Thyroid gland (tissue), 4 donors: ENCODE measurements at regions of chr6 and their contacts with region 1.

Region 1: DNA sequence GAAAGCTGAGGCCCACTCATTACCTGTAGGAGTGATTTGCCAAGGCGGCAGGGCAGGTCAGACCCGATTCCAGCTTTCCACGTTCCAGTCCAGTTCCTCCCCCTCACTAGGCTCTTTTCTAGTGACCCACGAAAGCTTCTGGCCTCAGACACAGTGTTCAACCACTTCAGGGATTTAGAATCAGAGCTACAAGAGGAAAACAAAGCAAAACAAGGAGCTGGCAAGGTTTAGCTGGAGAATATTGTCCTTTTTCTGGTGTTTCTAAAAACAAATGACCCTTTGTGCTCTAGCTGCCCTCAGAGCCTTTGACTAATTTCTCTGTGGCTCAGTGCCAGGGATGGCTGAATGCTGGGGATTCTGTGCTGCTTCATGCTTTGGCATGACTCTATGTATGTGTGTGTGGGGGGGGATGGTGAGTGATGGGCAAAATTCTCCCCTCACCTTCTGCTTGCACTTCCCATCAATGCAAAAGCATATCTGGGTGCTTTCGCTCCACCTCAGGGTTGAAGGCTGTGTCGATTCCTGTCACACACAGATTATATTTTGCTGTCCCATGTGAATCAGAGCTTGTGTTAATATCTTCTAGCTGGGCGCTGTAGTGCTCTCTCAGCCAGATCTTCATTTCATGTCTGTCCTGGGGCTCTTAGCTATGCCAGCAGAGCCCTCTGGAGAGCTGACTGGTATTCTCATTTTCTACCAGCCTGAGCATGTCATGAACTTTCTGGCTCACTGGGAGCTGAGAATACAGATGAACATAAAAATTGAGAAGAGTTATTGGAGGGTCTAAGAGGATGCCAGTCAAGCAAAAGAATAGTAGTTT is 19.3 kb upstream of the NEDD9 start:
- DNase-seq: peak; percentile 82
- H3K4me3 ChIP-seq: no peak overlapping the region
- H3K27ac ChIP-seq: peak overlapping the region; percentile 86 to 93 (median 88)
- H3K4me1 ChIP-seq: peaks cover 29 to 42% of the 10 kb centered on the region in 2 donors
- H3K27me3 ChIP-seq: no peaks in the 10 kb centered on the region
- CTCF ChIP-seq: peak in 1 of 6 experiments; percentile 4
- POLR2A ChIP-seq: peak in 1 of 2 donors; percentile 16

Region 2: GRCh38 chr6:10759312-10759839 is 492.4 kb before region 1 on chr6:
- intact Hi-C with region 1: no loop called
- DNase-seq: no peak
- H3K4me3 ChIP-seq: no peak overlapping the region
- H3K27ac ChIP-seq: peak overlapping the region; percentile 11 to 64 (median 41)
- H3K4me1 ChIP-seq: peaks cover 0 to 14% of the 10 kb centered on the region in 2 donors
- H3K27me3 ChIP-seq: no peaks in the 10 kb centered on the region
- CTCF ChIP-seq: peak in 3 of 6 experiments; percentile 35 to 44 (median 44)
- POLR2A ChIP-seq: no peak

Region 3: DNA sequence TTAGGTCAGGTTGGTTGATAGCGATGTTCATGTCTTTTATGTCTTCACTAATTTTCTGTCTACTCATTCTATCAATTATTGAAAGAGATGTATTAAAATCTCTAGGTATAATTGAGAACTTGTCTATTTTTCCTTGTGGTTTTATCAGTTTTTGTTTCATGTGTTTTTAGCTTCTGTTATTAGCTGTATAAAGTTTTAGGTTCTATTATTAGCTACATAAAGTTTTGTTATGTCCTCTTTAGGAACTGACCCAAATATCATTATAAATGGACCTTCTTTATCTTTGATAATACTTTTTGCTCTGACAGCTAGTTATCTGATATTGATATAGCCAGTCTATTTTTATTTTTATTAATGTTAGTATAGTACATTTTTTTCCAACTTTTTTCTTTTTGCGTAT is 193.4 kb after region 1 on chr6:
- intact Hi-C with region 1: no loop called
- DNase-seq: no peak
- H3K4me3 ChIP-seq: no peak overlapping the region
- H3K27ac ChIP-seq: peak overlapping the region; percentile 5 to 75 (median 66)
- H3K4me1 ChIP-seq: peaks cover 9 to 15% of the 10 kb centered on the region in 2 donors
- H3K27me3 ChIP-seq: no peaks in the 10 kb centered on the region
- CTCF ChIP-seq: no peak
- POLR2A ChIP-seq: no peak

Region 4: DNA sequence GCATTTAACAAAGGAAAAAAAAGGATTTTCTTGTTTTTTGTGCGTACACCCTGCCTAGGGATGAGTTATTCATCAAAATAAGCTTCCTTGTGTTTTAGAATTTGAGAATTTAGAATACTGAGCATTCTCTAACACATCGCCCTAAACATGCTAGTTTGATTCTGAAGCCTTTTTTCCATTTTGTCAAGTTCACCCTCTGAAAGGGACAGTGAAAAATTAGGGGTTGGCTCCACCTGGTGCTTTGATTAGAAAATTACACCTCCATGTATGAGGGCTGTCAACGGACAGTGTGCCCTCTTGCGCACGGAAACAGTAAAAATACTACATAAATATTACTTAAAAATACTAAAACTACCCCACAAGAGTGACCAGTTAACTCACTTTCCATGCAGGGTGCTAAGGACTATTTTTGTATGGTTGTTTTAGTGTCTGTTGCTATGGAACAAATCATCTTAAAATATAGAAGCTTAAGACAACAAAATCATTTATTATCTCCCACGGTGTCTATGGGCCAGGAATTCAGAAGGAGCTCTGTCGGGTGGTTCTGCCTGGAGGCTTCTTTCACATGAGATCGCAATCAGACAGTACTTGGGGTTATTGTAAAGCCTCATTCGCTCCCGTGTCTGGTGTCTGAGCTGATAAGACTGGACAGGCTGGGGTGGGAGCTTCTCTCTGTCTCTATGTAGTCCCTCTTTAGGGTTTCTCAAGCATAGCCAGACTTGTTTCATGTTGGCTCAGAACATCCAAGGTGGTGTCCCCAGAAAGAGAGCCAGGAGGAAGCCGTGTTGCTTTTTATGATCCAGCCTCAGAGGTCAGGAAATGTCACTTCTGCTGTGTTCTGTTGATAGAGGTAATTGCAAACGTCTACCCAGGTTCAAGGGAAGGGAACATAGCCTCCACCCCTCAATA is 244.7 kb after region 1 on chr6:
- intact Hi-C with region 1: loop called (anchors 10 kb)
- DNase-seq: peak; percentile 55 to 64
- H3K4me3 ChIP-seq: no peak overlapping the region
- H3K27ac ChIP-seq: peak overlapping the region in 2 of 3 donors; percentile 1 to 49
- H3K4me1 ChIP-seq: peaks cover 18 to 27% of the 10 kb centered on the region in 2 donors
- H3K27me3 ChIP-seq: no peaks in the 10 kb centered on the region
- CTCF ChIP-seq: peak; percentile 72 to 100 (median 92)
- POLR2A ChIP-seq: no peak

Region 5: DNA sequence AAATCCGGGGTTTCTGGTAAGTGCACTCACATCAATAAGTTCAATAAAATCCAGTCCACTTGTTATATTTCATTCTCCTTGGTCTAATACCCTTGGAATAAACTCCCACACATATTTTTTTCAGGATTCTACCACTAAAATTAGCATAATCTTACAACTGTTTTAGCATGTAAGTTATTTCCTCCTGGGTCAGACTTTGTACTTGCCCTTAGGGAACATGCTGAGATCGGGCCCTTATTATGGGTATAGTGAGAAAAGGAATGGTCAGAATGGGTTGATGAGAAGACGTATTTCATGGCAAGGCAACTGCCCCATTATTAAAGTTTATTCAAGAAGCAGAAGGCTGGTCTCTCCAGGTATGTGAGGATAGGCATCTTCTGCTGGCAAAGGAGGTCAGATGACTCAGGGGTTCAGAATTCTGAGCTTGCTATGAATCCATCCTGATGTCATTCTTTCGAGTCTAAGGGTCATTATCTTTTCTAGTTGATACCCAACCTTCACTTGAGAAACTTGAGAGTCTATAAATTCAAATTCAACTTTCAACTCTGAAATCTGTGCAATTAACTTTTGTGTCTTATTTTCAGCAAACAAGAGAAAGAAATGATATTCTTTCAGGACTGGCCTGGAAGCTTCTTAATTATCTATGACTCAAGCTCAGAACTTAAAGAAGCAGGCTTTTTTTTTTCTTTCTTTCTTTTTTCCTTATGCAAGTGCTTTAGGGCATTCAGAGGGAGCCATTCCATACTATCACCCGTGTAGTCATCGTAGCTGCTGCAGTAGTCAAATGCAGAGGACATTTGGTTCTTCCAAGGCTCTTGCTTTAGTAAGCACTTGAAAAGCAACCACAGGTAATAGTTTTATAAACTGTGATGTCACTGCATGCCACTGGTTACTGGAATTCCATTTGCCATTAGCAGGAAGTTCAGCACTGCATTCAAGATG is 433.7 kb after region 1 on chr6:
- intact Hi-C with region 1: no loop called
- DNase-seq: no peak
- H3K4me3 ChIP-seq: no peak overlapping the region
- H3K27ac ChIP-seq: no peak overlapping the region
- H3K4me1 ChIP-seq: no peaks in the 10 kb centered on the region
- H3K27me3 ChIP-seq: no peaks in the 10 kb centered on the region
- CTCF ChIP-seq: no peak
- POLR2A ChIP-seq: no peak